GM12878 (cell line): ENCODE measurements at regions of chr1 and their contacts with region 1.

Region 1: DNA sequence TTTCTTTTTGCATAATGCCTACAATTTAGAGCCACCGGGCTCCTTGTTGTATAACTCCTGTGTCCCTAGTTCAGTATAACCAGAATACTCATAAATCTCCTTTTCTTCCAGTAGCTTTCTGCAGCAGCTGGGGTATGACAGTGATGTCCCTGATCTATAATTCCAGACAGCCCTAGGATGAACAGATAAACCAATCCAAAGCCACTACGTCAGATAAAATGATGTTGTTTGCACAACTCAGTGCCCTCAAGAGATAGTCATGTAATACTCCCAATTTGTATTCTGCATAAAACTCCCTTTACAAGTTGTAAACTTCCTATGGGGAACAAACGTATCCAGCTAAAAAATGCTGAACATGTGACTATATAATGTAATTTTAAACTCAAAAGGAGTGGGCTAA is 44.7 kb downstream of the ZNF326 start:
- DNase-seq: no peak
- ATAC-seq: no peak
- H3K4me3 ChIP-seq: no peak overlapping the region
- H3K27ac ChIP-seq: no peak overlapping the region
- H3K4me1 ChIP-seq: no peaks in the 10 kb centered on the region
- H3K27me3 ChIP-seq: no peaks in the 10 kb centered on the region
- CTCF ChIP-seq: no peak
- EP300 ChIP-seq: no peak
- POLR2A ChIP-seq: no peak
- RAD21 ChIP-seq: no peak

Region 2: GRCh38 chr1:89943846-89944781 is 95.5 kb before region 1 on chr1:
- CTCF ChIA-PET with region 1: no interaction called
- POLR2A ChIA-PET with region 1: interaction called, 10 read pairs
- RAD21 ChIA-PET with region 1: no interaction called
- SMC1A ChIA-PET with region 1: no interaction called
- in situ Hi-C with region 1: no loop called
- intact Hi-C with region 1: no loop called
- DNase-seq: no peak
- ATAC-seq: no peak
- H3K4me3 ChIP-seq: no peak overlapping the region
- H3K27ac ChIP-seq: no peak overlapping the region
- H3K4me1 ChIP-seq: peaks cover 28% of the 10 kb centered on the region
- H3K27me3 ChIP-seq: no peaks in the 10 kb centered on the region
- CTCF ChIP-seq: no peak
- EP300 ChIP-seq: no peak
- POLR2A ChIP-seq: no peak
- RAD21 ChIP-seq: no peak

Region 3: GRCh38 chr1:90149101-90149500 is 109.4 kb after region 1 on chr1:
- CTCF ChIA-PET with region 1: no interaction called
- POLR2A ChIA-PET with region 1: no interaction called
- RAD21 ChIA-PET with region 1: no interaction called
- SMC1A ChIA-PET with region 1: no interaction called
- in situ Hi-C with region 1: no loop called
- intact Hi-C with region 1: no loop called
- DNase-seq: no peak
- ATAC-seq: no peak
- H3K4me3 ChIP-seq: no peak overlapping the region
- H3K27ac ChIP-seq: no peak overlapping the region
- H3K4me1 ChIP-seq: no peaks in the 10 kb centered on the region
- H3K27me3 ChIP-seq: no peaks in the 10 kb centered on the region
- CTCF ChIP-seq: no peak
- EP300 ChIP-seq: no peak
- POLR2A ChIP-seq: no peak
- RAD21 ChIP-seq: no peak